Esophagus muscularis mucosa (tissue), 4 donors: ENCODE measurements at regions of chr10 and their contacts with region 1.

Region 1: DNA sequence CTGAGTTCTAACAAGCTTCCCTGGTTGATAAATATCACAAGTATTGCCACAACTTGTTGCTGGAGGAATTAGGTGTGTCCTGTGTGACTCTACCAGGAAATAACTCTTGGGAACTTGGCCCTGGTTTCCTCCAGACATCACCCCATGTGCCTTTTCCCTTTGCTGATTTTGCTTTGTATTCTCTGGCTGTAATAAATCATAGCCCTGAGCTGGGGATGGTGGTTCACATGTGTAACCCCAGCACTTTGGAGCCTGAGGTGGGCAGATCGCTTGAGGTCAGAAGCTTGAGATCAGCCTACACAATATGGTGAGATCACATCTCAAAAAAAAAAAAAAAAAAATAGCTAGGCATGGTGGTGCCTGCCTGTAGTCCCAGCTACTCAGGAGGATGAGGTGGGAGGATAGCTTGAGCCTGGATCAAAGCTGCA is 3.1 kb upstream of the DENND10 start:
- DNase-seq: no peak
- H3K4me3 ChIP-seq: no peak overlapping the region
- H3K27ac ChIP-seq: no peak overlapping the region
- H3K4me1 ChIP-seq: peaks cover 10 to 18% (median 16%) of the 10 kb centered on the region in 4 donors
- H3K27me3 ChIP-seq: no peaks in the 10 kb centered on the region
- CTCF ChIP-seq: no peak
- EP300 ChIP-seq: no peak
- POLR2A ChIP-seq: no peak

Region 2: DNA sequence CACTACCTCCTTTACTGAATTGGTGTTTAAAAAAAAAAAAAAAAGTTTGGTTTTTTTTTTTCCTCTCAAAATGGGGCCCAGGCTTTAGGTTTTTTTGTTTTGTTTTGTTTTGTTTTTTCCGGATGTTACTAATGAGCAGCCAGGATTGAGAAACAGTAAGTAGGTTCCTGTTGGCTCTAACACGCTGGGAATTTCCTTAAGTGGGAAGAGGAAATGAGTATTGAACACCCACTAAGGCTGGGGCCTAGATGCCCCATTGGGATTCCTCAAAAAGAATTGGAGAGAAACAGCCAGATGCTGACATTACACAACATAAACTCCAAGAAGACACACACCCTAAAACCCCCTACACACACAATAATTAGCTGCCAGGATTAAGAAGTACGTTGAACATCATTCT is 173.5 kb before region 1 on chr10:
- intact Hi-C with region 1: no loop called
- DNase-seq: no peak
- H3K4me3 ChIP-seq: no peak overlapping the region
- H3K27ac ChIP-seq: no peak overlapping the region
- H3K4me1 ChIP-seq: no peaks in the 10 kb centered on the region
- H3K27me3 ChIP-seq: no peaks in the 10 kb centered on the region
- CTCF ChIP-seq: no peak
- EP300 ChIP-seq: no peak
- POLR2A ChIP-seq: no peak

Region 3: DNA sequence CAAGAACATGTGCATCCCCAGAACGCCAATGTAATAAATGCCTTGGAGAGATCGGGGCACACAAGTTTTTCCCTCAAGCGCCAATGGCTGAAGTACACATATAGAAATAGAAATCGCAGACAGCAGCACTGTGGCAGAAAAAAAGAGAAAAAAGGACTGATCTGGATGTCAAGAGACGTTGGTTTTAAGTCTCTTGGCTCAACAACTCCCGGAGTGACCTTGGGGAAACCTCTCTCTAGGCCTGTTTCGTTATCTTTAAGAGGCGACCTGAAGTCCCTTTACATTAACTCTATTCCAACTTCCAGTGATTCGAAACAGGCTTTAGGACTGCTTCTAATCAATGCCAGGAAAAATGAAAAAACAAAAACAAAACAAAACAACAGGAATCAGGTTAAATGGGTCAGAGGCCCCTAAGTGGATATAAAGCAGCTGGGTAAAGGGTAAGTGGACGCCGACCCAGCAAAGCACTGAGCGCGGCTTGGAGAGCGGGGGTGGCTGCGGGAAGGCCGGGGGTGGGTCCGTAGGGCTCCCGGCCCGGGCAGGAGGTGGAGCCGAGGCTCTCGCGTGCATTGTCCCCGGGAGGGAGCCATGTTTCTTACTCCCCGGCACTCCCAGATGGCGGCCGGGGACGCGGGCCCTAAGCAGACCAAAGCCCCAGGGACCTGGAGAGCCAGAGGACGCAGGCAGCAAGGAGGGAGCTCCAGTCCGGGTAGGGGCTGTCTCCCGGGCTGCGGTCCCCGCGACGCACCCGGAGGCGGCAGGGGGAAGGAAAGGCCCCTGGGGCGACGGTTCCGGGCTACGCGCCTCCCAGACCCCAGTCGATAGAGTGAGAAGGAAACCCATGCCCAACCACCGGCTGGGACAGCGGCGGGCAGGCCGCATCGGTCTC is 20.9 kb before region 1 on chr10:
- intact Hi-C with region 1: loop called (anchors 2 kb)
- DNase-seq: peak; percentile 93
- H3K4me3 ChIP-seq: peak overlapping the region; percentile 81 to 99 (median 93)
- H3K27ac ChIP-seq: peak overlapping the region; percentile 98 to 99 (median 98)
- H3K4me1 ChIP-seq: peaks cover 22 to 56% (median 48%) of the 10 kb centered on the region in 4 donors
- H3K27me3 ChIP-seq: no peaks in the 10 kb centered on the region
- CTCF ChIP-seq: no peak
- EP300 ChIP-seq: no peak
- POLR2A ChIP-seq: no peak